GM10248 (cell line): ENCODE measurements at regions of chr11 and their contacts with region 1.

Region 1: GRCh38 chr11:111429066-111429506 is 50.0 kb upstream of the POU2AF1 start:
- DNase-seq: peak; percentile 58
- CTCF ChIP-seq: peak; percentile 75

Region 2: DNA sequence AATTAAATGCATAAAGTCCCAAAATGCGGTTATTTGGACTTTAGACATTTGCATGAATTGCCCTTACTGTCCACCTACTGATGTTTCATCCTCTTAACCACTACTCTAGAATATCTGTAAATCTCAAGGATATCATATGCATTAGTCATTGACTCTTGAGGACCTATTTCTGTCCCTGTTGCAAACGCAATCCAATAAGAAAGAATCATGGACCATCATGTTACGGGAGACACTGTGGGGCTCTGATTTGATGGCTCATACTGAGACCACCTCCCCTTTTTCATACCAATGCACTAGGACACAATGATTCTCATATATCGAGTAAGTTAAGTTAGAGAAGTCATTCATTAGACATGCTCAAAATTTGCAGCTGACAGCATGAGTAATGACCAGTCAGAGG is 169.2 kb before region 1 on chr11:
- CTCF ChIA-PET with region 1: no interaction called
- POLR2A ChIA-PET with region 1: no interaction called
- DNase-seq: no peak
- CTCF ChIP-seq: no peak

Region 3: DNA sequence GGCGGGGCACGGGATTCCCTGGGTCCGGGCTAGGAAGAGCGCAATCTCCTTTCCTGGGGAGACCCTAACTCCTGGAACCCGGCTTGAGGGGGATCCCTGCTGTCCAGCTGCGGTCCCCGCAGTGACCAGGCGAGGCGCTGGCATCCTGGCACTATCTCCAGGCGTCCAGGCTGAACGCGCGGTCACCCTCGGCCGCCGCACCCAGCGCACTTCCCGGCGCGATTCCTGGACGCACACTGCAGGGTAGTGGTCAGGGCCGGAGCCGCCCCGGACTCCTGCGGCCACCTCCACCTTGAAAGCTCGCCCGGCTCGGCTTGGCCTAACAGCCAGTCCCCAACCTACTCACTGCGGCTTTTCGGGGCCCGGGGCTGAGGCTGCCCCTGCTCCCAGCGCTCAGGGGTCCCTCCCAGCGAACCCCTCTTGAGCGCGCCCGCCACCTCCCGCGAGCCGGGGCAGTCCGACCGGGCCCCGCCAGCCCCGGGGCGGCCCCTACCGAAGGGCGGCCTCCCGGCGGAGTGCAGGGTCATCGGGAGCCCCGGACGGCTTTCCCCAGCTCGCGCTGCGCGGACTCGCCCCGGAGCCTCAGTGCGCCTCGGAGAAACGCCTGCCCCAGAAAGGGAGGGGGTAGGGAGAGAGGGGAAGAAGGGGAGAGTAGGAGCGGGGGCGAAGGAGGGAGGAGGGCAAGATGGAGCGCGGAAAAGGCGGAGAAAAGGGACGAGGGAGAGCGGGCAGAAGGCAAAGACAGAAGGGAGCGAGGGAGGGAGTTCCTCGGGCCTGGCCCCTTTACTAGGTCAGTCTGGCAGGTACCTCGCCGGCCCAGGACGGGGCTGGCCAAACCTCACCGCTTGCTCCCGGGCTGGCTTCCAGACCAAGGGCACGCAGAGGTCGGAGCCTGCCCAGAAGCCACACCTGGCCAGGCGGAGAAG is 129.7 kb before region 1 on chr11:
- CTCF ChIA-PET with region 1: interaction called, 39 read pairs
- POLR2A ChIA-PET with region 1: no interaction called
- DNase-seq: peak; percentile 63
- CTCF ChIP-seq: peak; percentile 54

Region 4: GRCh38 chr11:111336582-111337256 is 92.4 kb before region 1 on chr11:
- CTCF ChIA-PET with region 1: interaction called, 20 read pairs
- POLR2A ChIA-PET with region 1: no interaction called
- DNase-seq: no peak
- CTCF ChIP-seq: no peak

Region 5: GRCh38 chr11:111393096-111393495 is 36.0 kb before region 1 on chr11:
- CTCF ChIA-PET with region 1: interaction called, 39 read pairs
- POLR2A ChIA-PET with region 1: no interaction called
- DNase-seq: no peak
- CTCF ChIP-seq: no peak

Region 6: DNA sequence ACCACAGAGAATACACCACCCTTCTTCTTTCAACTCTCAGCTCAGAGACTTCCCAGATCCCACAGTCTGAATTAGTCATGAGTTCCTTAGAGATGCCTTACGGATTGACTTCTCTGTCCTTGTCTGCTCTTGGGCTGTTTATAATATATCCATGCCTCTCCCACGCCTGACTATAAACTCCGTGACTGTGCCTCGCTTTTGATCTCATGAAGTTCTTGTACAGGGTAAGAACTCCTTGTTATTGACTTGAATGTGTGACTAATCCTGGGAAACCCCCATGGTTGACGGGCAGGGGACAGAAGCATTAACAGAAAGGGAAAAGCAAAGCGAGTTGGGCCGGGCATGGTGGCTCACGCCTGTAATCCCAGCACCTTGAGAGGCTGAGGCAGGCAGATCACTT is 12.4 kb after region 1 on chr11:
- CTCF ChIA-PET with region 1: interaction called, 75 read pairs
- POLR2A ChIA-PET with region 1: no interaction called
- DNase-seq: no peak
- CTCF ChIP-seq: no peak

Region 7: GRCh38 chr11:111454561-111455192 is 25.6 kb after region 1 on chr11:
- CTCF ChIA-PET with region 1: interaction called, 10 read pairs
- POLR2A ChIA-PET with region 1: no interaction called
- DNase-seq: peak; percentile 64
- CTCF ChIP-seq: peak; percentile 11